ENCODE measurements at regions of chr3 and their contacts with region 1.

Region 1: DNA sequence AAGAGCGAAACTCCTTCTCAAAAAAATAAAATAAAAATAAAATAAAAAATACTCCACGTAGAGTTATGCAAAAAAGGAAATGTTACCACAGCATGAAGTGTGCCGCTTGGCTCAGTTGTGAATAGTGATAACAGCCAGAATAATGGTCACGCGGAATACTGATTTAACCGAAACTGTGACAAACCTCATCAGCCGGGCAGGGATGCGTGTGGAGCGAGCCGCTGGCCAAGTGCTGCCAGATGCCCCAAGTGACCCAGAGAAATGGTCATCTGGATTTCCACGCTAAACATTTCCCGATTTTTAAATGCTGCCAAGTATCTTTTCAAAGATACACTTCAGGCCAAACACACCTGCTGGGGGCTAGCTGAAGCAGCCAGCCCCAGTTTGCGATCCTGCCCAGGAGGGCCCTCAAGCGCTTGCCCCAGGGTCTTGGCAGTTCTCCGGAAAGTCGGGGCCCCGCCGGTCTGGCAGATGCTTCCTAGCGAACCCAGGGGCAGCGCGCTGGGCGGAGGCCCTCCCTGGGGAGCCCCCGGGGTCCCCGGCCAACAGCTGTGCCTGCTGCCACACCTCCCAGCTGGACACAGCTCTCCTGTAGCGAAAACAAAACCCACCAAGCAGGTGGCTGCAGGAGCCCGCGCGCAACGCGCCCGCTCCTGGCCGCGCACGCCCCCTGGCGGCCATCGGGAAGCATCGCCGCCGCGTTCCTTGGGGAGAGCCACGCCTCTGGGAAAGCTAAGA is 35.1 kb downstream of the CMTM6 start:
- DNase-seq: no peak
- ATAC-seq: peak; percentile 80
- H3K4me3 ChIP-seq: peak overlapping the region; percentile 43; the same call in 1 of the 2 replicates
- H3K27ac ChIP-seq: no peak overlapping the region
- H3K4me1 ChIP-seq: peaks cover 39% of the 10 kb centered on the region
- H3K27me3 ChIP-seq: no peaks in the 10 kb centered on the region
- CTCF ChIP-seq: peak; percentile 95 to 96 (median 96); a peak in 5 of 6 replicates
- EP300 ChIP-seq: no peak
- POLR2A ChIP-seq: no peak
- RAD21 ChIP-seq: peak; percentile 96

Region 2: DNA sequence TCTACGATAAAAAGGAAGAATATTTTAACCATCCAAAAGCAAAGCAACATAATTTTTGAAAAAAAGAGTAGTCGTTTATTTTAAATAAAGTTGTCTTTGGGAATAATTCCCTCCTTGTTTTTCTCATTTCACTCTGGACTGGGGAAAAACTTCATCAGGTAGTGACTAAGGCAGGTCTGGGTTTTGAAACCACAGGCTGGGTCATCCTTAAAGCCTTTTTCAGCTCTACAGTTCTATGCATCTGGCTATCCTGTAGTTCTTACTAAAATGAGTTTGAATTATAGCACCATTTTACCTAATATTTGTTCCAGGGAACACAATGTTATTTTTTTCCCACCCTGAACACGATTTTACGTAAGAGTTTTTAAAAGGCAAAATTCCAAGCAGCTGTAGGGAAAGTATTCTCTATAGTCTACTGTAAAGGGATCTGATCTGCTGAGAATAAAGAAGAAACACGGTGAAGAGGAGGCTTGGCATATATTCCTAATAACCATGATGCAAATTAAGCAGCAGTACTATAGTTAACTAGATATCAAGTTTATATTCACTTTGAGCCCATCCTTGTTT is 594.2 kb before region 1 on chr3:
- CTCF ChIA-PET with region 1: no interaction called
- POLR2A ChIA-PET with region 1: no interaction called
- RAD21 ChIA-PET with region 1: no interaction called
- SMC1A ChIA-PET with region 1: no interaction called
- in situ Hi-C with region 1: no loop called
- intact Hi-C with region 1: no loop called
- DNase-seq: no peak
- ATAC-seq: no peak
- H3K4me3 ChIP-seq: no peak overlapping the region
- H3K27ac ChIP-seq: no peak overlapping the region
- H3K4me1 ChIP-seq: no peaks in the 10 kb centered on the region
- H3K27me3 ChIP-seq: no peaks in the 10 kb centered on the region; a peak in 1 of 4 replicates
- CTCF ChIP-seq: no peak
- EP300 ChIP-seq: no peak
- POLR2A ChIP-seq: no peak
- RAD21 ChIP-seq: no peak

Region 3: GRCh38 chr3:32296256-32297204 is 171.0 kb before region 1 on chr3:
- CTCF ChIA-PET with region 1: interaction called, 8 read pairs
- POLR2A ChIA-PET with region 1: no interaction called
- RAD21 ChIA-PET with region 1: interaction called, 35 read pairs
- SMC1A ChIA-PET with region 1: interaction called, 23 read pairs
- in situ Hi-C with region 1: loop called (anchors 5 kb)
- intact Hi-C with region 1: loop called (anchors 1 kb)
- DNase-seq: no peak
- ATAC-seq: peak; percentile 94
- H3K4me3 ChIP-seq: no peak overlapping the region
- H3K27ac ChIP-seq: no peak overlapping the region
- H3K4me1 ChIP-seq: no peaks in the 10 kb centered on the region
- H3K27me3 ChIP-seq: no peaks in the 10 kb centered on the region; a peak in 1 of 4 replicates
- CTCF ChIP-seq: peak; percentile 71 to 89 (median 81)
- EP300 ChIP-seq: no peak
- POLR2A ChIP-seq: no peak
- RAD21 ChIP-seq: peak; percentile 67

Region 4: GRCh38 chr3:32401556-32402081 is 65.9 kb before region 1 on chr3:
- CTCF ChIA-PET with region 1: interaction called, 88 read pairs
- POLR2A ChIA-PET with region 1: interaction called, 6 read pairs
- RAD21 ChIA-PET with region 1: interaction called, 57 read pairs
- SMC1A ChIA-PET with region 1: interaction called, 31 read pairs
- in situ Hi-C with region 1: no loop called
- intact Hi-C with region 1: loop called (anchors 2 kb)
- DNase-seq: no peak
- ATAC-seq: peak; percentile 83
- H3K4me3 ChIP-seq: peak overlapping the region; percentile 61
- H3K27ac ChIP-seq: no peak overlapping the region
- H3K4me1 ChIP-seq: peaks cover 3% of the 10 kb centered on the region
- H3K27me3 ChIP-seq: peaks cover 0 to 3% of the 10 kb centered on the region in 2 experiments; a peak in 1 of 4 replicates
- CTCF ChIP-seq: no peak
- EP300 ChIP-seq: no peak
- POLR2A ChIP-seq: no peak
- RAD21 ChIP-seq: no peak

Region 5: GRCh38 chr3:32420126-32421038 is 47.1 kb before region 1 on chr3:
- CTCF ChIA-PET with region 1: interaction called, 41 read pairs
- POLR2A ChIA-PET with region 1: interaction called, 5 read pairs
- RAD21 ChIA-PET with region 1: interaction called, 67 read pairs
- SMC1A ChIA-PET with region 1: interaction called, 36 read pairs
- in situ Hi-C with region 1: no loop called
- intact Hi-C with region 1: loop called (anchors 5 kb)
- DNase-seq: peak; percentile 56
- ATAC-seq: peak; percentile 91
- H3K4me3 ChIP-seq: no peak overlapping the region
- H3K27ac ChIP-seq: no peak overlapping the region
- H3K4me1 ChIP-seq: peaks cover 35% of the 10 kb centered on the region
- H3K27me3 ChIP-seq: no peaks in the 10 kb centered on the region
- CTCF ChIP-seq: peak in 1 of 3 experiments; percentile 22; a peak in 2 of 6 replicates
- EP300 ChIP-seq: peak; percentile 68 to 89; a peak in 3 of 4 replicates
- POLR2A ChIP-seq: no peak
- RAD21 ChIP-seq: peak; percentile 48

Region 6: DNA sequence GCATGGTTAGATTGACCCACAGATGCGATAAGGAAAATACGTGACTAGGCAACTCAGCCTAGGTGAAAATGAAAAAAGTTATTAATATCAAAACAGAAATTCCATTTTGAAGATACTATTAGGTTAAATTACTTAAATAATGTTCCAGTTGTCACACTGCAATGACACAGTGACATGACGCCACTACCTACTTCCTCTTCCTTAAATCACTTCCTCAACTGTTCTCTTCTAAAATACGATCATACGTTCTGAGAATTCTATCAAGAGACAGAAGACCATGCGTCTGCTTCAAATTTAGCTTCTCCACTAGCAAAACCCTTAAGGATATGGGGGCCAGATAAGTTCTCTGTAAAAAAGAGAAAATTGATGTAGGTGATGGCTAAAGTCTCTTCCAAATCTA is 16.9 kb after region 1 on chr3:
- CTCF ChIA-PET with region 1: interaction called, 14 read pairs
- POLR2A ChIA-PET with region 1: interaction called, 4 read pairs
- RAD21 ChIA-PET with region 1: interaction called, 10 read pairs
- SMC1A ChIA-PET with region 1: interaction called, 8 read pairs
- in situ Hi-C with region 1: no loop called
- intact Hi-C with region 1: no loop called
- DNase-seq: no peak
- ATAC-seq: no peak
- H3K4me3 ChIP-seq: no peak overlapping the region
- H3K27ac ChIP-seq: no peak overlapping the region
- H3K4me1 ChIP-seq: no peaks in the 10 kb centered on the region
- H3K27me3 ChIP-seq: no peaks in the 10 kb centered on the region
- CTCF ChIP-seq: no peak
- EP300 ChIP-seq: no peak
- POLR2A ChIP-seq: no peak
- RAD21 ChIP-seq: no peak

Measured in GM12878 (cell line).